Activated CD8-positive, alpha-beta T cell treated with anti-CD3 and anti-CD28 coated beads, Interleukin-2, amount 10 ng/mL, durations not matched to agents 7 days and 5 days (primary cell): ENCODE measurements at regions of chr6 and their contacts with region 1.

Region 1: DNA sequence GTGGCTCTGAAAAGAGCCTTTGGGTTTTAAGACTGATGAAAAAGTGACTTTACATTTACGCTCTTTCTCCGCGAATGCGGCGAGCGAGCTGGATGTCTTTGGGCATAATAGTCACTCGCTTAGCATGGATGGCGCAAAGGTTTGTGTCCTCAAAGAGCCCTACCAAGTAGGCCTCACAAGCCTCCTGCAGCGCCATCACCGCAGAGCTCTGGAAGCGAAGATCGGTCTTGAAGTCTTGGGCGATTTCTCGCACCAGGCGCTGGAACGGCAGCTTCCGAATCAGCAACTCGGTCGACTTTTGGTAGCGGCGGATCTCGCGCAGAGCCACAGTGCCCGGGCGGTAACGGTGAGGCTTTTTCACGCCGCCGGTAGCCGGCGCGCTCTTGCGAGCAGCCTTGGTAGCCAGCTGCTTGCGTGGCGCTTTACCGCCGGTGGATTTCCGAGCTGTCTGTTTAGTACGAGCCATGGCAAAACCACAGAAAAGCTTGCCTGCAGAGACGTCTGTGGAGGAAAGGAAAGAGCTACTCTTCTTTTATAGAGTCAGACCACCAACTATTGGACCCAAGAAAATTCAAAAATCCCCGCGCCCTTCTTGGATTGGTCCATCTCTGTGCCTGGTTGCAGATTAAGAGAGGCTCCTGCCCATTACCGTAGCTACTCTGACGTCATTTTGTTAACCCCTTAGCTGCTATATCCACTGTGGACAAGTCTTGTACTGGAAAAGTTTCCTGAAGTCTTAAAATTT is 55.5 kb upstream of the HFE start:
- DNase-seq: peak; percentile 97
- ATAC-seq: peak; percentile 66
- H3K4me3 Mint-ChIP-seq: peak overlapping the region; percentile 93
- H3K27ac Mint-ChIP-seq: peak overlapping the region; percentile 99
- H3K4me1 Mint-ChIP-seq: peaks cover 68% of the 10 kb centered on the region
- H3K27me3 Mint-ChIP-seq: peaks cover 3% of the 10 kb centered on the region

Region 2: DNA sequence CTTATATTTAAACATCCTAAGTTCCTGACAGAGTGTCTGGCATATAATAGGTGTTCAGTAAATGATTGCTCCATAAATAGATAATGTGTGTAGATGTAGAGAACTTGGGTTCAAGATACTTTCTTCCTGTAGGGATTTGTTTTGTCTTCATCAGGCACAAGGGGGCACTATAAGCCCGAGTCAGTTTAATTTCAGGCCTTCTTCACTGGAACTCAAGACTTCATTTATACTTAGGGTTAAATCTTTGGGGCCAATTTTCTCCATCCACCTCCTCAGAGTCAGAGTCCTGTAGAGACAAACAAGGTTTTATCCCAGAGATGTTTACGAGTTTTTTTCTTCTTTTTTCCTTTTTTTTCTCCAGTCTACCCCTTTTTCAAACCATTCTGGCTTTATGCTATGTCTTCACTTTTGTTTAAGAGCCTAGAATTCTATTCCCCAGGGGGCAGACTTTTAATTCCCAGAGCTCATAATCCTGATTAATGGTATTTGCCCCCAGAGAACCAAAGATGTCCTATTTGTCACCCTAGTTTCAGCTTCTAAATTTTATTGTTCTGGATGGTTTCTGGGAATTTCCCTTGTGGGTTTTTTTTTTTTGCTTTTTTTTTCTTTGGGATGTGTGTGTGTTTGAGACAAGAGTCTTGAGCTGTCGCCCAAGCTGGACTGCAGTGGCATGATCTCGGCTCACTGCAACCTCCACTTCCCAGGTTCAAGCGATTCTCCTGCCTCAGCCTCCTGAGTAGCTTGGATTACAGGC is 143.8 kb after region 1 on chr6:
- CTCF ChIA-PET with region 1: no interaction called
- POLR2A ChIA-PET with region 1: interaction called, 13 read pairs
- DNase-seq: peak; percentile 82
- ATAC-seq: peak; percentile 11
- H3K4me3 Mint-ChIP-seq: peak overlapping the region; percentile 38
- H3K27ac Mint-ChIP-seq: peak overlapping the region; percentile 59
- H3K4me1 Mint-ChIP-seq: peaks cover 42% of the 10 kb centered on the region
- H3K27me3 Mint-ChIP-seq: no peaks in the 10 kb centered on the region

Region 3: DNA sequence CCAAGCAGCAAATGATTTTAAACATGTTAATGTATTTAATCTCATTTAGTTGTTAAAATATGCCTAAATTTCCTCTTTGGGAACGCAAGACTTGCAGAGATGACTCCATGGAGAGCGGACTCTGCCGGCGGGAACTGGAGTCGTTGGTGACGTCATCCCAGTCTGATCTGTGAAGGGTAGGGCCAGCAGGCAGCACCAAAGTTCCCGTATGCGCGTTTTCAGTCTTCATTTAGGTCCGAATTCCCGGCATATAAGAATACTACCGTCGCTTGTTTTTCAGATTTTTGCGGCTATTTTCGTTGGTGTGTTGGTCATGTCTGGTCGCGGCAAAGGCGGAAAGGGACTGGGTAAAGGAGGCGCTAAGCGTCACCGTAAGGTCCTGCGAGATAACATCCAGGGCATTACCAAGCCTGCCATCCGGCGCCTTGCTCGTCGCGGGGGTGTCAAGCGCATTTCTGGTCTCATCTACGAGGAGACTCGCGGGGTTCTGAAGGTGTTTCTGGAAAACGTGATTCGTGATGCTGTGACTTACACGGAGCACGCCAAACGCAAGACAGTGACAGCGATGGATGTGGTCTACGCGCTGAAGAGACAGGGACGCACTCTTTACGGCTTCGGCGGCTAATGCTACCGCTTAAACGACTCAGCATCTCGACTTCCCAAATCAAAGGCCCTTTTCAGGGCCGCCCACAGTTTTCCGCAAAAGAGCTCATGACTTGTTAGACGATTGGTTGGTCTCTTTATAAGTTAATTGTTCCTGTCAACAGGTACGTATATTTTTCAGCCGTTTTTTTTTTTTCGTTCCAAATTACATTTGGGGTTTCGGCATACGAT is 172.8 kb after region 1 on chr6:
- CTCF ChIA-PET with region 1: no interaction called
- POLR2A ChIA-PET with region 1: interaction called, 534 read pairs
- DNase-seq: peak; percentile 95
- ATAC-seq: peak; percentile 66
- H3K4me3 Mint-ChIP-seq: no peak overlapping the region
- H3K27ac Mint-ChIP-seq: no peak overlapping the region
- H3K4me1 Mint-ChIP-seq: peaks cover 41% of the 10 kb centered on the region
- H3K27me3 Mint-ChIP-seq: no peaks in the 10 kb centered on the region

Region 4: GRCh38 chr6:26249957-26250697 is 218.4 kb after region 1 on chr6:
- CTCF ChIA-PET with region 1: no interaction called
- POLR2A ChIA-PET with region 1: interaction called, 59 read pairs
- DNase-seq: peak; percentile 85
- ATAC-seq: peak; percentile 55
- H3K4me3 Mint-ChIP-seq: peak overlapping the region; percentile 84
- H3K27ac Mint-ChIP-seq: peak overlapping the region; percentile 100
- H3K4me1 Mint-ChIP-seq: peaks cover 30% of the 10 kb centered on the region
- H3K27me3 Mint-ChIP-seq: no peaks in the 10 kb centered on the region

Region 5: GRCh38 chr6:27825025-27825793 is 1793.4 kb after region 1 on chr6:
- CTCF ChIA-PET with region 1: no interaction called
- POLR2A ChIA-PET with region 1: interaction called, 30 read pairs
- DNase-seq: no peak
- ATAC-seq: peak; percentile 3
- H3K4me3 Mint-ChIP-seq: peak overlapping the region; percentile 93
- H3K27ac Mint-ChIP-seq: peak overlapping the region; percentile 99
- H3K4me1 Mint-ChIP-seq: peaks cover 45% of the 10 kb centered on the region
- H3K27me3 Mint-ChIP-seq: no peaks in the 10 kb centered on the region